Heart left ventricle (tissue), 16 donors: ENCODE measurements at regions of chr16 and their contacts with region 1.

Region 1: GRCh38 chr16:88737298-88738150 is 31.2 kb downstream of the CTU2 start:
- DNase-seq: peak; percentile 54 to 87 (median 74)
- ATAC-seq: peak; percentile 39 to 79 (median 66)
- H3K4me3 ChIP-seq: no peak overlapping the region
- H3K27ac ChIP-seq: peak overlapping the region in 1 of 12 donors; percentile 48
- H3K4me1 ChIP-seq: peaks cover 0 to 11% (median 0%) of the 10 kb centered on the region in 12 donors
- H3K27me3 ChIP-seq: no peaks in the 10 kb centered on the region
- CTCF ChIP-seq: peak; percentile 95 to 99 (median 98)
- POLR2A ChIP-seq: no peak

Region 2: DNA sequence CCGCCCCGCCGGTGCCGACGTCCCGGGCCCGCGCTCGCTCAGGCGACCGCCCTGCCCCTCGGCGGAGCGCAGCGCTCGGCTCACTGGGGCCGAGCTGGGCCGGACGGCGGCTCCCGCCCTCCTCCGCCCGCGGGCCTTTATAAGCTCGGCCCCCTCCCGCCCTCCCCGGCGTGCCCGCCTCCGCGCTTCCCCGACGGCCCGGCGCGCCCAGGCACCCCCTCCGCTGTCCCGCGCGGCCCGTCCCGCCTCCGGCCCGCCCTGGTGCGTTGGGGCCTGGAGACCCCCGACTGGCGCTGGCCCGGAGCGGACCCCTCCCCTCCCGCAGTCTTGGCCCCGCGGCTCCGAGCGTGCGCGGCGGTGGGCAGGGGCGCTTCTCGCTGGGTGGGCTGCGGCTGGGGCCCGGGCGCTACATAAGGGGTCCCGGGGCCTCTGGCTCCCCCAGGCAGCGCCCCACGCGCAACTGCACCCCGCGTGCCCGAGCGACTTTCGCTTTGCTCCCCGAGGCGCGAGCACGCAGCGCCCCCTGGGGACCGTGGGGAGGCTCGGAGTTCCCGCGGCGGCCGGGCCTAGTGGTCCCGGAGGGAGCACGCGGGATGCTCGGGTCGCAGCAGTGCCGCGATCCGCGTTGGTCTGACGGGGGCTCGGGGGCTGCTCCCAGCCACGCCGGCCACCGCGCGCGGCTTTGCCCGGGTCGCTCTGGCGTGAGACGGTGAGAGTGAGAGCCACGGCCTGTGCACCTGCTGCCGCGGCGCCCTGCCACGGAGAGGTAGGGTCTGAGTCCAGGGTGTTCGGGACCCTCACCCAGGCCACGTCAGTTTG is 47.8 kb after region 1 on chr16 and contains the start of gene PIEZO1:
- intact Hi-C with region 1: loop called in 4 of 10 experiments (anchors 2 kb)
- DNase-seq: peak; percentile 71 to 90 (median 77)
- ATAC-seq: peak in 3 of 4 donors; percentile 34 to 74 (median 70)
- H3K4me3 ChIP-seq: peak within 1 kb of the TSS; percentile 56 to 92 (median 70)
- H3K27ac ChIP-seq: peak within 1 kb of the TSS; percentile 77 to 95 (median 88)
- H3K4me1 ChIP-seq: peaks cover 0 to 57% (median 35%) of the 10 kb centered on the region in 12 donors
- H3K27me3 ChIP-seq: no peaks in the 10 kb centered on the region
- CTCF ChIP-seq: peak; percentile 78 to 91 (median 88)
- POLR2A ChIP-seq: peak in 1 of 2 donors; percentile 76
- total RNA-seq, gene PIEZO1: 14.2 to 59.7 (median 19.7) TPM

Region 3: DNA sequence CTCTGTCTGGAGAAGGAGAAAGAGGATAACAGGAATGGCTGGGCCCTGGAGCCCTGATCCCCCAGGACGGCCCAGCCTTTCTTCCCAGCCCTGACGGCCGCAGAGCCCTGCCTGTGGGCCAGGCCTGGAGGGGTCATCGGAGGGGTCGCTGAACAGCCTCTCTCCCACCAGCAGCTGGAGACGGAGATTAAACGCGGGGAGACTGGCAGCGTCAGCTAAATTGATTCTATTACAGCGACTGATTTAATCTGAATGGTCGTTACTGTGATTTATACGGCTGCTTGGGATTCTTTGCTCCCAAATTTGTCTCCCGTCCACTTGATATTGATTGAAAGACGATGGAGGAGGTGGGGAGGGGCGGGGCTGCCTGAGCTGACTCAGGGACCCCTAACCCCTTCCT is 426.9 kb after region 1 on chr16:
- intact Hi-C with region 1: loop called in 8 of 10 experiments (anchors 2 to 5 kb)
- DNase-seq: no peak
- ATAC-seq: no peak
- H3K4me3 ChIP-seq: no peak overlapping the region
- H3K27ac ChIP-seq: no peak overlapping the region
- H3K4me1 ChIP-seq: peaks cover 0 to 9% (median 4%) of the 10 kb centered on the region in 12 donors
- H3K27me3 ChIP-seq: peaks cover 4 to 42% (median 14%) of the 10 kb centered on the region in 9 donors
- CTCF ChIP-seq: no peak
- POLR2A ChIP-seq: no peak

Region 4: GRCh38 chr16:89171463-89172170 is 434.1 kb after region 1 on chr16 and contains the start of gene CDH15:
- intact Hi-C with region 1: loop called in 8 of 10 experiments (anchors 2 to 5 kb)
- DNase-seq: peak; percentile 85 to 95 (median 92)
- ATAC-seq: peak; percentile 91 to 96 (median 94)
- H3K4me3 ChIP-seq: peak within 1 kb of the TSS in 10 of 12 donors; percentile 5 to 44 (median 40)
- H3K27ac ChIP-seq: no peak within 1 kb of the TSS
- H3K4me1 ChIP-seq: peaks cover 0 to 20% (median 12%) of the 10 kb centered on the region in 12 donors
- H3K27me3 ChIP-seq: peaks cover 4 to 61% (median 29%) of the 10 kb centered on the region in 9 donors
- CTCF ChIP-seq: no peak
- POLR2A ChIP-seq: no peak
- total RNA-seq, gene CDH15: 0.16 to 0.32 TPM in 2 of 9 donors, not detected in the others